ENCODE measurements at regions of chr10 and their contacts with region 1.

Region 1: GRCh38 chr10:8159341-8160165 is 105.1 kb downstream of the GATA3 start:
- DNase-seq: peak; percentile 14
- ATAC-seq: peak; percentile 93
- H3K4me3 Mint-ChIP-seq: no peak overlapping the region
- H3K27ac Mint-ChIP-seq: peak overlapping the region; percentile 53
- H3K4me1 Mint-ChIP-seq: peaks cover 11% of the 10 kb centered on the region
- H3K27me3 Mint-ChIP-seq: peaks cover 3% of the 10 kb centered on the region

Region 2: DNA sequence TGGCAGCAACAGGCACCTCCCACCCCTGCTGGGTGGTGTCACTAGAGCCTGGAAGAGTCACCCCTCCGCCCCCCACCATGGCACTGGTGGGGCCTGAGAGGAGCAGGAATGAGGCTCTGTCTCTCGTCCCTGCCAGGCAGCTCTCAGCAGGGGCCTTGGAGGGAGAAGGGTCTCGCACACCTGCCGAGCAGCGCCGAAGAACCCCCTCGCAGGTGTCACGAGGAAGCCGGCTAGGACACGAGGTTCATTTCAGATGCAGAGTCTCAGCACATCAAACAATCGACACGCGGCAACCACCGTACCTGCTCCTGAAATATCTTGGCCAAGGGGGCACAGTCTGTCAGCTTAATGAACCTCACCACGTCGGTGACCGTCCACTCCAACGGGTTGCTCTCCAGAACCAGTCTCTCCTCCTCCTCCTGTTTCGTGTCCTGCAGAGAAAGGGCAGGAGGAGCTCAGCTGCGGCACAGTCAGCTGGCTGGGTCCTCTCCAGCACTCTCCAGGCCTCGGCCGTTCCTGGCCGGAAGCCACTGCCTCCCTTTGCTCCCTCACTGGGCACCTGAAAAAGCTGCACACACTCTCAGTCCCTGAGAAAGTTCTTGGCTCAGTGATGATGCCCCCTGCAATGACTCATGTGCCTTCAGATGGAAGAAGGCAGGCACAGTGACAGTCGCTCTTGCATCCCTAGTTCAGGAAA is 988.8 kb before region 1 on chr10:
- CTCF ChIA-PET with region 1: no interaction called
- POLR2A ChIA-PET with region 1: no interaction called
- intact Hi-C with region 1: no loop called
- DNase-seq: no peak
- ATAC-seq: no peak
- H3K4me3 Mint-ChIP-seq: no peak overlapping the region
- H3K27ac Mint-ChIP-seq: no peak overlapping the region
- H3K4me1 Mint-ChIP-seq: no peaks in the 10 kb centered on the region
- H3K27me3 Mint-ChIP-seq: no peaks in the 10 kb centered on the region

Region 3: GRCh38 chr10:8193546-8193945 is 34.0 kb after region 1 on chr10:
- CTCF ChIA-PET with region 1: no interaction called
- POLR2A ChIA-PET with region 1: no interaction called
- intact Hi-C with region 1: loop called in 1 of 2 experiments (anchors 2 kb)
- DNase-seq: no peak
- ATAC-seq: no peak
- H3K4me3 Mint-ChIP-seq: no peak overlapping the region
- H3K27ac Mint-ChIP-seq: no peak overlapping the region
- H3K4me1 Mint-ChIP-seq: peaks cover 9% of the 10 kb centered on the region
- H3K27me3 Mint-ChIP-seq: peaks cover 9% of the 10 kb centered on the region

Region 4: DNA sequence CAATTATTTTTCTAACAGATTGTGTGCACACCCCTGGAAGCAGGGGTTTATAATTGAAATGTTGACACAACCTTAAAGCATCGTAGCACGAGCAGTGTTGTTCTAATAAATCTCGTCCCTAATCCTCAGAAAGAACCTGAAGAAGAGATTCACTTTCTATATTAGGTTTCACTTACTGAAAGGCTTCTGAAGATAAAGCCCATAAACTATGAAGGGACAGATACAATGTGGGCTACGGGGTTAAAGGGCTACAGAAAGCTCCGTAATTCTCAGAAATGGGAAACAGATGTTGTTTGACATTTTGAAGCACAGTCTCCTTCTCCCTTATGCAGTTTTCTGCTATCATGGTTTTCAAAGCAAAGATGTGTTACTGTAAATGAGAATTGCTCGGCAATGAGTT is 374.5 kb after region 1 on chr10:
- CTCF ChIA-PET with region 1: no interaction called
- POLR2A ChIA-PET with region 1: no interaction called
- intact Hi-C with region 1: no loop called
- DNase-seq: no peak
- ATAC-seq: no peak
- H3K4me3 Mint-ChIP-seq: no peak overlapping the region
- H3K27ac Mint-ChIP-seq: no peak overlapping the region
- H3K4me1 Mint-ChIP-seq: peaks cover 10% of the 10 kb centered on the region
- H3K27me3 Mint-ChIP-seq: peaks cover 8% of the 10 kb centered on the region